ENCODE measurements at regions of chr9 and their contacts with region 1.

Region 1: GRCh38 chr9:6015278-6016157 is at the start of gene RANBP6:
- DNase-seq: peak; percentile 92 to 95 (median 93)
- ATAC-seq: peak; percentile 99 to 100 (median 100)
- H3K4me3 ChIP-seq: peak within 1 kb of the TSS; percentile 59 to 82 (median 74)
- H3K27ac ChIP-seq: peak within 1 kb of the TSS in 11 of 12 donors; percentile 73 to 91 (median 82)
- H3K4me1 ChIP-seq: peaks cover 0 to 40% (median 28%) of the 10 kb centered on the region in 12 donors
- H3K27me3 ChIP-seq: no peaks in the 10 kb centered on the region
- CTCF ChIP-seq: peak in 1 of 12 donors; percentile 16
- POLR2A ChIP-seq: peak in 1 of 2 donors; percentile 48
- total RNA-seq, gene RANBP6: 17.1 to 65.5 (median 24.1) TPM

Region 2: DNA sequence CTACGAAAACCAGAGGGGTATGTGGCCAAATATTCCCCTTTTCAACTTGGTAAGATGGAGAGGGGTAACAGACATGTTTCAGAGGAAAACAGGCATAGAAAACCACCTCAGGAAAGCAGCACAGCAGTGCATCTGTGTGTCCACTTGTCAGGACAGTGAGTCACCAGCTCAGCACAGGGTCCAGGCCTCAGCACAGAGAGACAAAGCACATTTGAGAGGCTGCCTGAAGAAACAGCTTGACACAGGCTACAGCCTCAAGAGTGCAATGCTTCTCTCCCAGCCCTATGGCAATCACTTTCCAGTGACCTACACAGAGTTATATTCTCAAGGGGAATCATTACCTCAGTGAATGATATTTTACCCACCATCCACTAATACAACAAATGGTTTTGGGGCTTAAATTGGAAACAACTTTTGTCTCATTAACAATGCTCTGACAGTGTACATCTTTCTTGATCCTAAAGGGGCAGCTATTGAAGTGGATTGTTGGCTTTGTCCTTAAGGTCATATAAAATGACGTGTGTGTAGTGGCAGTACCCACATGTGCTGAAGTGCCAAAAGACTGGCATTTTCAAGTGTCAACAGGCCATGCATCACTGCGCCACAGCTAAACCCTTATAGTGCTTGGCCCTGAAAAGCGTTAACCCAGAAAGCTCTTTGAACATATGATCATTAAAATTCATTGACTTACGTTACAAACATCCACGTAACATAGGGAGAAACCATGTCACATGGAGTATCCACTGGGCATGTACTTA is 229.0 kb before region 1 on chr9:
- intact Hi-C with region 1: no loop called
- DNase-seq: no peak
- ATAC-seq: peak; percentile 44 to 85 (median 66)
- H3K4me3 ChIP-seq: no peak overlapping the region
- H3K27ac ChIP-seq: peak overlapping the region in 2 of 12 donors; percentile 10 to 14
- H3K4me1 ChIP-seq: peaks cover 0 to 25% (median 0%) of the 10 kb centered on the region in 12 donors
- H3K27me3 ChIP-seq: no peaks in the 10 kb centered on the region
- CTCF ChIP-seq: no peak
- POLR2A ChIP-seq: no peak

Region 3: GRCh38 chr9:5949103-5949699 is 66.3 kb before region 1 on chr9:
- intact Hi-C with region 1: loop called in 1 of 10 experiments (anchors 5 kb)
- DNase-seq: no peak
- ATAC-seq: peak in 1 of 4 donors; percentile 50
- H3K4me3 ChIP-seq: peak overlapping the region in 7 of 12 donors; percentile 5 to 36 (median 24)
- H3K27ac ChIP-seq: no peak overlapping the region
- H3K4me1 ChIP-seq: peaks cover 0 to 25% (median 8%) of the 10 kb centered on the region in 12 donors
- H3K27me3 ChIP-seq: no peaks in the 10 kb centered on the region
- CTCF ChIP-seq: no peak
- POLR2A ChIP-seq: no peak